Ascending aorta (tissue), 2 donors: ENCODE measurements at regions of chr1 and their contacts with region 1.

Region 1: DNA sequence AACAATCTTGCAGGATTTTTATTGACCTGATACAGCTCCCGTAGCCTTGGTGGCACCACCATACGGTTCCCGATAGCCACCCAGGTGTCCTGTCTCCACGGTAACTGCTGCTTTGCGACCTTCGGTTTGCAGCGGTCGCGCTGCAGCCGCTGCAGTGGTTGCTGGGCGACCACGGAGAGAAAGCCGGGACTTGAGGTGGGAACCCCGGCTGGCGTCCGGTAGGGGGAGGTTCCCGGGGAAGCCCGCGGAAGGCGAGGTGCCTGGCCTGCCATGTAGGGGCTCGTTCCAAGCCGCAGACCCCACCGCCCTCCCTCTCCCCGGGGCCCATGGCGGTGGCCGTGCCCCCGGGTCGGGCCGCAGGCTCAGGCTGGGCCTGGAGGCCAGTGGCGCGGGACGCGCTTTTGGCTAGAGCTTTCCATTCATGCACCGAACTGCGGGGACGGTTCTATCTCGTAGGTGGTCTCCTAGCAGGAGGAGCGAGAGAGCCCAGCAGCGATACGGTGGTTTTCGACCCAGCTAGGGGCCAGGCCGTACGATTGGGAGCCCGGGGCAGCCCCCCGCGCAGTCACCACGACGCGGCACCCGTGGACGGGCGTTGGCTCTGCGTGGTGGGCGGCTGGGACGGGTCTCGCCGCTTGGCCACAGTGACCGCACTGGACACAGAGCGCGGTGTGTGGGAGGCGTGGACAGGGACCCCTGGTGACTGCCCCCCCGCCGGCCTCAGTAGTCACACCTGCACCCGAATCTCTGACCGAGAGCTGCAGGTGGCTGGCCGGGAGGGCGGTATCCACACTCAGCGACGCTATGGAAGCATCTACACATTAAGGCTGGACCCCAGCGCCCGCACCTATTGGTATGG is at the start of gene KLHDC9:
- DNase-seq: peak in 1 of 2 donors; percentile 82
- H3K4me3 ChIP-seq: peak within 1 kb of the TSS; percentile 71
- H3K27ac ChIP-seq: peak within 1 kb of the TSS; percentile 41 to 73
- H3K4me1 ChIP-seq: peaks cover 0 to 15% of the 10 kb centered on the region in 2 donors
- H3K27me3 ChIP-seq: no peaks in the 10 kb centered on the region
- CTCF ChIP-seq: peak in 1 of 3 experiments; percentile 27
- total RNA-seq, gene KLHDC9: 0.32 TPM

Region 2: DNA sequence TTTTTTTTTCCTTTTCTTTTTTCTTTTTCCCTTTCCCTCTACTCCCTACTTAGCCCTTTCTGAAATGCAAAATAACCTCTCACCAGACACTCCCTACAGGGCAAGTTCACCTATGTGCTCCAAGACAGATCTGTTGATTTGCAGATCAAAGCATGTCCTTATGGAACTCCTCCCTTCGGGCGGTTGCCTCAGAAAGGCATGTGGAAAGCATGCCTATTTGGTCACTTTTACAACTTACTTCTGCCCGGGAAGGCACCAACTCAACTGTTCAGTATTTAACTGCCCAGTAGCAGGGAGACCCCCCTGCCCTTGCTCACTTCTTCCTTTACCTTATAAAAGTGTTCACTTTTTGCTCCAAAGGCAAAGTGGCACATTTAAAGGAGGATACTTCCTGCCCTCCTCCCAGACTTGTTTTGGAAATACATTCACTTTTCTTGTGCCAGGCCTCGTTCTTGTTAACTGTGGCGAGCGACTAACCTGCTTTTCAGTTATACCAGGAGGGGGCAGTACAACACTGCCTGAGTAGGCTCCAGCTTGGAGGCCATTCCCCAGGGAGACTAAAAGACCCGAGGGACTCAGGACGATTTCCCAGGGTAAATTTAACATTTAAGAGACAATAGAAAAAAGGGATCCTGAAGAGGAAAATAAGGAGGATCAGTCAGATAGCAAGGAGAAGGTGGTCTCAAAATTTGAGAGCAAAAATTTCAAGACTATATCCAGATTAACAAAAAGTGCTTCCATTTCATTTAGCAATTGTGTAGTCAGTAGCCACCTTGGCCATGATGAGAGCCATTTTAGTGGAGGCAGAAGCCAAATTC is 371.7 kb before region 1 on chr1:
- intact Hi-C with region 1: loop called (anchors 10 kb)
- DNase-seq: no peak
- H3K4me3 ChIP-seq: no peak overlapping the region
- H3K27ac ChIP-seq: no peak overlapping the region
- H3K4me1 ChIP-seq: no peaks in the 10 kb centered on the region
- H3K27me3 ChIP-seq: no peaks in the 10 kb centered on the region
- CTCF ChIP-seq: peak; percentile 43 to 66 (median 59)

Region 3: GRCh38 chr1:160830321-160831153 is 267.9 kb before region 1 on chr1:
- intact Hi-C with region 1: loop called (anchors 10 kb)
- DNase-seq: peak in 1 of 2 donors; percentile 69
- H3K4me3 ChIP-seq: no peak overlapping the region
- H3K27ac ChIP-seq: no peak overlapping the region
- H3K4me1 ChIP-seq: no peaks in the 10 kb centered on the region
- H3K27me3 ChIP-seq: no peaks in the 10 kb centered on the region
- CTCF ChIP-seq: peak in 2 of 3 experiments; percentile 10 to 32

Region 4: DNA sequence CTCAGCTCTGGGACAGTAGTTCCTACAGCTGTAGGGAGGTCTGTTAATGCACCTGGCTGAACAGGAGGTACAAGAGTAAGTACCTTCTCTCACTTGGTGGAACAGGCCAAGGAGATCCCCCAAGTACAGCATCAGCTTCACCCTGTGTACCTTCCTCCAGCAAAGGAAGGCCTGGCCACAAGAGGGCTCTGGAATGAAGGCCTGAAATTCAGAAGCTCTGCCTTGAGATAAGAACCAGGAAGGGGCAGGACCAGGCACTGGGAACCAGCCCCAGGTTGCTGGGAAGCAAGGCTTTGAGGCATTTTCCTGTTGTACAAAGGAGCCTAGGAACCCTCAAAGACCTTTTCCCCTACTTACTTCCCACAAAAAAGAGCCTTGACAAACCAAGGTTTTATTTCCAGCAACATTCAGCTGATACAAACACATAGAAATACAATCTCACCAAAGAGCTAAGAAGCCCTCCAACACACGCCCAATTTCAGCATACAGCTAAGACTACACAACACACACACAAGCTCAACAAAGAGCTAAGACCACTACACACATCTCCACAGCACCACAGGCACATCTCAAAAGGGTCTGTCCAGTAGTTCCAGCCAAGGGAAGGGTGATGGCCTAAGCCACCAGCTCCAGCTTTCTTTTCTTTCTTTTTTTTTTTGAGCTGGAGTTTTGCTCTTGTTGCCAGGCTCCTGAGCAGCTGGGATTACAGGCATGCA is 101.0 kb before region 1 on chr1:
- intact Hi-C with region 1: loop called (anchors 5 kb)
- DNase-seq: peak in 1 of 2 donors; percentile 75
- H3K4me3 ChIP-seq: no peak overlapping the region
- H3K27ac ChIP-seq: peak overlapping the region in 1 of 2 donors; percentile 16
- H3K4me1 ChIP-seq: no peaks in the 10 kb centered on the region
- H3K27me3 ChIP-seq: no peaks in the 10 kb centered on the region
- CTCF ChIP-seq: peak in 2 of 3 experiments; percentile 41 to 43

Region 5: GRCh38 chr1:161013488-161014230 is 84.8 kb before region 1 on chr1:
- intact Hi-C with region 1: no loop called
- DNase-seq: peak; percentile 72 to 89
- H3K4me3 ChIP-seq: no peak overlapping the region
- H3K27ac ChIP-seq: peak overlapping the region; percentile 63 to 64
- H3K4me1 ChIP-seq: no peaks in the 10 kb centered on the region
- H3K27me3 ChIP-seq: no peaks in the 10 kb centered on the region
- CTCF ChIP-seq: no peak

Region 6: DNA sequence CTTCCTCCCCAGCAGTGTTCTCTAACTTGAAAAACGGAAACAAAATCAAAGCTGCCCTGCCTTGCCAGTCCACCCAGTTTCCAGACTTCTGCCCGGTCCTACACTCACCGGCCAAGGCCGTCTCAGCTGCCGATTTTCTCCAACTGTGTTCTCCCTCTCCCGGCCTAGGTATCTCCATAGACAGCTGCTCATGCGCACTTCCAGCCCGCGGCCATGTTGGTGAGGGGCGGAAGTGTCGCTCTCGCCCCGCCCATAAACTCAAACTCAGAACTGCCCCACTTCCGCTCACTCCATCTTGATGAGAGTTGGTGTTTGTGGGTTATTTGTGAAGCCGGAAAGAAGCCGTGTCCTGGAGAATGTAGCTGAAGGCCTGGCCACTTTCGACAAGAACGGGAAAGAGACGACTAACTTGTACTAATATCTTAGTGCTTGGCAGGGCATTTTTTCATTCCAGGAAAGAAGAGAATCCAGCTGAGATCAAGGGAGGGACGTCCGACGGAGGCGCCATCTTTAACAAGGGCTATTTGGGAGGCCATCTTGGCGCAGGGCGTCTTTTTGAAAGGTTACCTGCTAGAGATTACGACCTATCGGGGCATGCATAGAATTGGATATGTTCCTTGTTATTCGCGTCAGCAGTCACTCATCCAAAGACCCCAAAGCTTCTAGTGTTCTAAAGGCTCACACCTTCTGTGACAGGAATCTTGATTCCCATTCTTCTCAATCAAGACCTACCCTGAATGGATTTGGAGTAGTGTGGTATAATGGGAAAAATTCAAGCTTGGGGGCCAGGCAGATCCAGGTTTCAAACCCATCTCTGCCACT is 52.5 kb before region 1 on chr1 and contains the start of gene USF1:
- intact Hi-C with region 1: loop called (anchors 1 kb)
- DNase-seq: peak; percentile 79 to 97
- H3K4me3 ChIP-seq: peak within 1 kb of the TSS; percentile 63 to 95
- H3K27ac ChIP-seq: peak within 1 kb of the TSS; percentile 93 to 96
- H3K4me1 ChIP-seq: peaks cover 6 to 13% of the 10 kb centered on the region in 2 donors
- H3K27me3 ChIP-seq: no peaks in the 10 kb centered on the region
- CTCF ChIP-seq: no peak
- total RNA-seq, gene USF1: 68.5 TPM

Region 7: GRCh38 chr1:161117759-161118581 is 19.5 kb after region 1 on chr1 and contains the starts of genes NIT1 and PFDN2:
- intact Hi-C with region 1: loop called (anchors 1 kb)
- DNase-seq: peak; percentile 37 to 92
- H3K4me3 ChIP-seq: peak within 1 kb of the TSS; percentile 76 to 98
- H3K27ac ChIP-seq: peak within 1 kb of the TSS; percentile 94 to 98
- H3K4me1 ChIP-seq: peaks cover 10 to 26% of the 10 kb centered on the region in 2 donors
- H3K27me3 ChIP-seq: no peaks in the 10 kb centered on the region
- CTCF ChIP-seq: peak in 1 of 3 experiments; percentile 3
- total RNA-seq, gene NIT1: 44.9 TPM
- total RNA-seq, gene PFDN2: 16.3 TPM